Kidney (tissue), 22 donors: ENCODE measurements at regions of chr4 and their contacts with region 1.

Region 1: DNA sequence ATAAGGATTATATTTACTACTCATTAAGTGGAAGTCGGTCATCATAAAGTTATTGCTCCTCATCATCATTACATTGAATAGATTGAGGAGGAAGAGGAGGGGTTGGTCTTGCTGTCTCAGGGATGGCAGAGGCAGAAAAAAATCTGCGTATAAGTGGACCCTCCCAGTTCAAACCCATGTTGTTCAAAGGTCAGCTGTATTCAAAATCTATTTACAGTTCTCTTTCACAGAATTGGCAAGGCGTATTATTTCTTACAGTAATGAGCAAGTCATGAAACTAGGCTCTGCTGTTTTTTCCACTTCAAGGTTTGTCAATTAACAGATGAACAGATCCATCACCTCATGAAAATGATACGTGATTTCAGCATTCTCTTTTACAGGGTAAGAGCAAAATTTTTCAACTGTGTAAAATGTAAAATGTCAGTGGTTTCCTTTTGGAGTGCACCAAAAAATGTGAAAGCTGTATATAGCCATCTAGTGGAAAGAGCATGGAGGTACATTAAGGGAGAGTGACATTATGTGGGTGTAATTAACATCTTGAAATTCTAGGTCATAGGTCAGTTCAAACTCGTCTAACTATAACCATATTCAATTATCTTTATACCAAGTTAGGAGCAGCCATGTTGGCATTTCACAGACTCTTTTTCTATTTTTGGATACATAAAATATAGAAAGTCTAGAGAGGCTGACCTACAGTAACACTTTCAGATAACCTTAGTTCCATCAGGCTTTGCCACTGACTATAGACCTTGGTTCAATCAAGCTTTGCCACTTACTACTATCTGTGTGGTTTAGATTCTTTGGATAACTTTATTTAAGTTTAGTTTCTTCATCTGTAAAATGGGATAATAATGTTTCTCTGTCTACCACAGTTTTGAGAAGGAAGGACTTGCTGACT is 30.1 kb downstream of the NEIL3 start:
- DNase-seq: peak in 2 of 5 donors; percentile 34 to 60
- H3K4me3 ChIP-seq: no peak overlapping the region
- H3K27ac ChIP-seq: no peak overlapping the region
- H3K4me1 ChIP-seq: no peaks in the 10 kb centered on the region
- H3K27me3 ChIP-seq: no peaks in the 10 kb centered on the region
- CTCF ChIP-seq: peak; percentile 53

Region 2: GRCh38 chr4:176778491-176778890 is 561.2 kb before region 1 on chr4:
- intact Hi-C with region 1: no loop called
- DNase-seq: no peak
- H3K4me3 ChIP-seq: no peak overlapping the region
- H3K27ac ChIP-seq: no peak overlapping the region
- H3K4me1 ChIP-seq: no peaks in the 10 kb centered on the region
- H3K27me3 ChIP-seq: no peaks in the 10 kb centered on the region
- CTCF ChIP-seq: no peak

Region 3: GRCh38 chr4:177250056-177250696 is 89.5 kb before region 1 on chr4:
- intact Hi-C with region 1: loop called (anchors 10 kb)
- DNase-seq: peak; percentile 78 to 85 (median 81)
- H3K4me3 ChIP-seq: no peak overlapping the region
- H3K27ac ChIP-seq: no peak overlapping the region
- H3K4me1 ChIP-seq: no peaks in the 10 kb centered on the region
- H3K27me3 ChIP-seq: no peaks in the 10 kb centered on the region
- CTCF ChIP-seq: peak; percentile 82